Panc1 (cell line): ENCODE measurements at regions of chr5 and their contacts with region 1.

Region 1: GRCh38 chr5:63194126-63194525 is 615.5 kb downstream of the LRRC70 start:
- DNase-seq: no peak
- ATAC-seq: no peak
- H3K4me3 ChIP-seq: no peak overlapping the region
- H3K27ac ChIP-seq: no peak overlapping the region
- H3K4me1 ChIP-seq: no peaks in the 10 kb centered on the region
- H3K27me3 ChIP-seq: no peaks in the 10 kb centered on the region
- CTCF ChIP-seq: no peak

Region 2: GRCh38 chr5:62569470-62569869 is 624.7 kb before region 1 on chr5:
- CTCF ChIA-PET with region 1: no interaction called
- POLR2A ChIA-PET with region 1: interaction called, 22 read pairs
- in situ Hi-C with region 1: no loop called
- intact Hi-C with region 1: no loop called
- DNase-seq: no peak
- ATAC-seq: no peak
- H3K4me3 ChIP-seq: no peak overlapping the region
- H3K27ac ChIP-seq: no peak overlapping the region
- H3K4me1 ChIP-seq: no peaks in the 10 kb centered on the region
- H3K27me3 ChIP-seq: no peaks in the 10 kb centered on the region
- CTCF ChIP-seq: no peak